ENCODE measurements at regions of chr9 and their contacts with region 1.

Region 1: GRCh38 chr9:133048569-133048968 is 13.2 kb upstream of the CEL start:
- DNase-seq: peak in 3 of 7 donors; percentile 27 to 61 (median 42)
- H3K4me3 ChIP-seq: no peak overlapping the region
- H3K27ac ChIP-seq: no peak overlapping the region
- H3K4me1 ChIP-seq: no peaks in the 10 kb centered on the region
- H3K27me3 ChIP-seq: no peaks in the 10 kb centered on the region
- CTCF ChIP-seq: peak in 5 of 6 experiments; percentile 5 to 40 (median 25)
- POLR2A ChIP-seq: no peak

Region 2: DNA sequence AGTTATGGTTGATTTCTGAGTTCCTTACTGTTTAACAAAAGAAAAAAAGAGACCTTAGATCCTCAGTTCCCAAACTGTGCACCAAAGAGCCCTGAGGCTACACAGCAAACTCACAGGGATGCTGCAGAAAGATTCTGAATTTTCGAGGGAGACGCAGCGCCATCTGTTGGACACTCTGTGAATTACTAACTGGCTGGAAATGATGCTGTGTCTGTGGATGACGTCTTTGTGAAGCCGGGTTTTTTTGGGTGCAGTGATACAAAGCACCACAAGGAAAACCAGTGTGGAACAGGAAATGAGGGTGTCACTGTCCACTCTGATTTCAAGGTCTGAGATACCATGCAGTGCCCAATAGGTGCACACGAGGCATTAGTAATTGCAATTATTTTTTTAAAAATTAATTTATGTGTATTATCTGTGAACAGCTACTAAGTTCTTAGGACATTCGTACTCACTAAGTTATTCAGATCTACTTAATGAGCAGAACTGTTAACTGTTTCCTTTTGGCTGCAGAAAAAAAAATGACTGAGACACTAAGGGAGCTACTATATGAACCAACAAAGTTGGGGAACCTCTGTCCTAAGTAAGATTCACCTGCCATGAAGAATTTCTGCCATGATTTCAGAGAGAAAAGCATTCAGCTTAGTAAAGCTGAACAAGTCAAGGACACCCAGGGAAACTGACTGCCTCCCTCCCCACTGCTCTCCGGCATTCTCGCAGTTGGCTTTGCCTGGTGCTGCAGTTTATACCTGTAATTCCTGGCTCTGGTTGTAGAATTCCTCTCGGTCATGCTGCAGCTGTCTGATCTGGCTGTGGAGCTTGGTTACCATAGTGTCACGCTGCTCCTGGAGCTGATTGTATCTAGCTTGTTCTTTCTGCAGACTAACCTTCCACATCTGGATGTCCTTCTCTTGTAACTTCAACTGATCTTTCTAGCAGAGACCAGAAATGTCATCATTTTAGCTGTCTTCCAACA is 146.4 kb before region 1 on chr9:
- intact Hi-C with region 1: no loop called
- DNase-seq: peak; percentile 63 to 96 (median 82)
- H3K4me3 ChIP-seq: no peak overlapping the region
- H3K27ac ChIP-seq: peak overlapping the region in 1 of 5 donors; percentile 62
- H3K4me1 ChIP-seq: peaks cover 0 to 3% of the 10 kb centered on the region in 2 donors
- H3K27me3 ChIP-seq: no peaks in the 10 kb centered on the region
- CTCF ChIP-seq: peak; percentile 94 to 98 (median 96)
- POLR2A ChIP-seq: no peak

Region 3: GRCh38 chr9:133090187-133090586 is 41.6 kb after region 1 on chr9:
- intact Hi-C with region 1: loop called in 1 of 2 experiments (anchors 10 kb)
- DNase-seq: no peak
- H3K4me3 ChIP-seq: no peak overlapping the region
- H3K27ac ChIP-seq: no peak overlapping the region
- H3K4me1 ChIP-seq: no peaks in the 10 kb centered on the region
- H3K27me3 ChIP-seq: no peaks in the 10 kb centered on the region
- CTCF ChIP-seq: no peak
- POLR2A ChIP-seq: no peak

Region 4: DNA sequence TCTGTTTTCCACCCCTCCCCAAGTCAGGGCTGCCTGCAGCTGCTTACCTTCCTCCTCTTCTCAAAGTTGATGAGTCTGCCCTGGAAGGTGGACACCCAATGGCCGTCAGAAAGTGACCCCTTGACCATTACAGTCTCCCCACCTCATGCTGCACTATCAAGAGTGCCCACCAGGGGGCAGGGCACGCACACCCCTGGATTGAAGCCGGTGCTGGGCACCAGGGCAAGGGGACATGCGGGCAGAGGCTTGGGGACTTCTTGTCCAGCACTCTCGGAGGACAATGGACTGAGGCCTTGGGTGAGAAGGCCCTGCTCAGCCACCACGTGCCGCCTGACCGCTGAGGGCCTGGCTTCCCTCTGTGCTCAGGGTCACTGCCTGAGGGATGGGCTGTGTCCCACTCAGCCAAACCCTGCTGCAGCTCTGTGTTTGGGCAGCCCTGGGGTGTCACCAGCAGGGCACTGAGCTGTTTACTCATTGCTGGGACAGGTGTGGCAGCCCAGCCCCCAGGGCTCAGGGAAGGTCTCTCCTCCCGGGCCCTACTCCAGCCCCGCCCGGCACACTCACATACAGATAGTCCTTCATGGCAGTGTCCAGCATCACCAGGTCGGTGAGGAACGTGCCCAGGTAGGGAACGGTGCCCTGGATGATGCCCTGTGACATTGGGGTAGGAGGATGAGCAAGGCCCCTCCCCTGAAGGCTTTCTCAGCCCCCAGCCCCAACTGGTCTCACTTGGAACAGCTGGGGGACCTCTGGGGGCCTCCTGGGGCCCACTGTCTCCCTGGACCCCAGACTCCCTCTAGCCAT is 54.8 kb after region 1 on chr9:
- intact Hi-C with region 1: loop called (anchors 5 to 10 kb)
- DNase-seq: peak; percentile 66 to 87 (median 79)
- H3K4me3 ChIP-seq: no peak overlapping the region
- H3K27ac ChIP-seq: peak overlapping the region in 3 of 5 donors; percentile 23 to 50 (median 39)
- H3K4me1 ChIP-seq: peaks cover 0 to 5% of the 10 kb centered on the region in 2 donors
- H3K27me3 ChIP-seq: no peaks in the 10 kb centered on the region
- CTCF ChIP-seq: peak; percentile 96 to 98 (median 97)
- POLR2A ChIP-seq: no peak

Region 5: GRCh38 chr9:133149126-133150107 is 100.8 kb after region 1 on chr9:
- intact Hi-C with region 1: loop called in 1 of 2 experiments (anchors 10 kb)
- DNase-seq: peak; percentile 92 to 96 (median 94)
- H3K4me3 ChIP-seq: peak overlapping the region in 1 of 4 donors; percentile 52
- H3K27ac ChIP-seq: peak overlapping the region; percentile 66 to 93 (median 86)
- H3K4me1 ChIP-seq: peaks cover 23 to 26% of the 10 kb centered on the region in 2 donors
- H3K27me3 ChIP-seq: no peaks in the 10 kb centered on the region
- CTCF ChIP-seq: peak in 3 of 6 experiments; percentile 27 to 46 (median 31)
- POLR2A ChIP-seq: peak in 1 of 2 donors; percentile 84

Region 6: DNA sequence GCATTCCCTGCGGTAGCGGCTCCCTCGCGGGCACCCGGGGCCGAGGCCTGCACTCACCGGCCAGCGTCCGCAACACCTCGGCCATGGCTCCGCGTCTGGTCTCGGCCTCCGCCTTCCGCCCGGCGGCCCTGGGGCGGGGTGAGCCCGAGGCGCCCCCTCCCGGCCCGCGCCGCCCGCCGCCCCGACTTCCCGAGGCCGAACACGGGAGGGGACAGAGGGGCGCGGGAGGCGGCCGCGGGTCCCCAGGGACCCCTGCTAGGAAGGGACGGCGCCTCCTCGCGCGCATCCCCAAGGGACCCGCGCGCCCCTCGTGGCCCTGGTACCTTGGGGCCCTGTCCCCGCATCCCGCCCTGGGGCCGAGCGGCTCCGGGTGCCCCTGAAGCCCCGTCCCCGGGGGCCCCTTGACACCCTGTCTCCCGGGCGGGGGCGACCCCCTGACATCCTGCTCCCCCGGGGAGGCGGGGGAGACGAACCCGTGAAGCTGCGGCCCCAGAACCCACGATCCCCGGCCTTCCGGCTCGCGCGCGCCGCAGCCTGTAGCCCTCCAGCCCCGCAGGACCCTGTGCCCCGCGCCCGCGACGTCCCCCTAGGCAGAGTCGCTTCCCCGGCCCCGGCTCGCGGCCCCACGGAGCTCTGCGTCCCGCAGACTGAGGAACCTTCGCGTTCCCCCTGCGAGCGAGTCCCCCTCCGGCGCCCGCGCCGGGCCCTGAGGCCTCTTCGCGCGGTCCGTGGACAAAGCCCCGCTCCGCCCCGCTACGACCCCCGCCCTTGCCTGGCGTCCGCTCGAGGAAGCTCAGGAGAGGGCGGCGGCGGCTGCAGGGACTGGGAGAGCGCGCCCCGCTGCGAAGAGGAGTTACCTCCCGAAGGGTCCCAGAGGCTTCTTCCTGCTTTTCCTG is 226.8 kb after region 1 on chr9 and contains the start of gene ABO:
- intact Hi-C with region 1: no loop called
- DNase-seq: peak in 5 of 7 donors; percentile 34 to 57 (median 53)
- H3K4me3 ChIP-seq: peak within 1 kb of the TSS in 3 of 4 donors; percentile 18 to 75 (median 49)
- H3K27ac ChIP-seq: peak within 1 kb of the TSS; percentile 48 to 89 (median 79)
- H3K4me1 ChIP-seq: peaks cover 7 to 12% of the 10 kb centered on the region in 2 donors
- H3K27me3 ChIP-seq: peaks cover 5% of the 10 kb centered on the region
- CTCF ChIP-seq: peak in 3 of 6 experiments; percentile 38 to 47 (median 40)
- POLR2A ChIP-seq: peak in 1 of 2 donors; percentile 21
- total RNA-seq, gene ABO: 2.9 to 43.1 (median 18.7) TPM

Measured in adrenal gland (tissue), 19 donors.